ENCODE measurements at regions of chrX and their contacts with region 1.

Region 1: GRCh38 chrX:110167952-110168451 is 149.9 kb downstream of the AMMECR1 start:
- DNase-seq: peak; percentile 80

Region 2: GRCh38 chrX:110046001-110046400 is 122.0 kb before region 1 on chrX:
- CTCF ChIA-PET with region 1: no interaction called
- POLR2A ChIA-PET with region 1: no interaction called
- DNase-seq: no peak

Region 3: DNA sequence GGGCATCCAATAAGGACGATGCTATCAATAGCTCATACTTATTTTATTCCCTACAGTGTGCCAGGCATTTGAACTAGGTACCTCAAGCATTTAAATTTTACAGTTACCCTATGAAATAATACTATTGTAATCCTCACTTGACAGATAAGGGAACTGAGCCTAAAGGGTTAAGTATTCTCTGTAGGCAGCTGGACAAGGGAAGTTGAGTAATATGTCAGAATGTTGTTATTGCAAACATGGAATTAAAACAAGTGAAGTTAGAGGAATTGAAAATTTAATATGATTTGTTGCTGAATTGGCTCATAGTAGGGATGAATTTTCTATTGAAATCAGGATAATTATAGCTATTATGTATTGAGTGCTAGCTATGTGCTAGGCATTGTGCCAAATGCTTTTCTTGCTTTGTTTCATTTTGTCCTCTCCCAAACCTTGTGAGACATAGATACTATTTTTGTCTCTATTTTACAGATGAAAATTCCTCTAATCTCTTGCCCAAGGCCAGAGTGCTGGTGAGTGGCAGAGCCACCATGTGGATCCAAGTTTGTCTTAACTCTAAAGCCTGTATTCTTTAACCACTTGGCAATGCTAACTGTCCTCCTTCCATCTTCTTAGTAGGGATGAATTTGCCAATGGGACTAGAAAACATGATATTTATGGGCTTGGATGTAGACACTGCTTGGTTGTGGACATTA is 107.0 kb before region 1 on chrX:
- CTCF ChIA-PET with region 1: no interaction called
- POLR2A ChIA-PET with region 1: no interaction called
- DNase-seq: no peak

Region 4: GRCh38 chrX:110156167-110156754 is 11.7 kb before region 1 on chrX:
- CTCF ChIA-PET with region 1: interaction called, 10 read pairs
- POLR2A ChIA-PET with region 1: no interaction called
- DNase-seq: no peak

Region 5: DNA sequence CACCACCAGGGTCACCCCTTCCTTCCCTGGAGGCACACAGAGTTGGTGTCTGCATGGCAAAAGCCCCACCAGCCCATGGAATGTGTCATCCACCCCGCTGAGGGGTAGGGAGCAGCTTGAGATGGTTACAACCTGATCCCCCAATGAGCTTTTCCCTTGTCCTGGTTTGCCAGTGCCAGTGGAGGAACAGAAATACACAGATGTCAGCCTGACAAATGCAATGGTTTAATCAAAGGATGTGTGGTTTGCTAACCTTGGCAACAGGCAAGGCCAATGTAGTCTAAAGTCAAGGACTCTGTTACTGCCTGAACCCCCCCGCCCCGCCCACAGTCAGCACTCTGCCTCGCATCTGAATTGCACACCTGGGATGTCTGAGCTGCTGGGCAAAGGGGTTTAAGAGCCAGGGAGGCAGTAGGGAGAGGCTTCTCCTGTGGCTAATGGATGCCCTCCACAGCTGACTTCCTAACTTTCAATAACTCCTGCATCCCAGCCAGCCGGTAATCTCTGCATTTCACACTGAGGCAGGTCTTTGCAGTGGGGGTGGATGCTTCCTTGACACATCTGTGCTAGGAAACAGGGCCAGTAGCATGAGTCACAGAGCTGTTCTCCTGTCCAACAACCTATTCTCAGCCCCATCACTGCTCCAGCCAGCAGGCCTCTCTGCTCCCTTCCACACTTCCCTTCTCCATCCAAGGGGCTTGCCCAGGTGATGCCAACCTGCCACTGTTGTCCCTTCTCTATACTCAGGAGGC is 12.3 kb after region 1 on chrX:
- CTCF ChIA-PET with region 1: interaction called, 38 read pairs
- POLR2A ChIA-PET with region 1: interaction called, 3 read pairs
- DNase-seq: no peak

Region 6: GRCh38 chrX:110412971-110413721 is 245.1 kb after region 1 on chrX:
- CTCF ChIA-PET with region 1: interaction called, 93 read pairs
- POLR2A ChIA-PET with region 1: interaction called, 4 read pairs
- DNase-seq: peak; percentile 93